ENCODE measurements at regions of chr9 and their contacts with region 1.

Region 1: GRCh38 chr9:4762108-4762885 is 21.3 kb upstream of the AK3 start:
- DNase-seq: peak; percentile 73
- ATAC-seq: peak; percentile 57
- H3K4me3 ChIP-seq: no peak overlapping the region
- H3K27ac ChIP-seq: no peak overlapping the region
- H3K4me1 ChIP-seq: no peaks in the 10 kb centered on the region
- H3K27me3 ChIP-seq: peaks cover 5% of the 10 kb centered on the region
- CTCF ChIP-seq: peak; percentile 86
- POLR2A ChIP-seq: 0 out of 2 replicates have a peak, but pooled peaks have one; percentile 31
- RAD21 ChIP-seq: peak; percentile 91

Region 2: DNA sequence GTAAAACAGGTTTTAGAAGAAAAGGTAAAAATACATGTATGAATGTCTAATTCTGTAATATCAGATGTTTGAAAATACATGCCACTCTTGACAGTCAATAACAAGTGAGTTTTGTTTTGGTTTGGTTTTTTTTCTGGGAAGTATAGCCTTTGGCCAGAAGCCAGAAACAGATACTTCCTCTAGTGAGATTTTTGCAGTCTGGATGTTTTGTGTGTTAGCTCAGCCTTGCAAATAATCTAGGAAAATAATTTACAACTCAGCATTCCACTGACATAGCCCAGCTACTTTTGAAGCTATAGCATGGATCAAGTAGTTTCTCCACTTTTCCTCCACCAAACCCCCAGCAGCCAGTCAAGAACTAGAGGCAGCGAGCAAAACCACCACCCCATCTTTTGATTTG is 215.3 kb before region 1 on chr9:
- CTCF ChIA-PET with region 1: no interaction called
- POLR2A ChIA-PET with region 1: no interaction called
- dilution Hi-C with region 1: no loop called
- in situ Hi-C with region 1: no loop called
- intact Hi-C with region 1: no loop called
- DNase-seq: peak; percentile 37
- ATAC-seq: peak; percentile 66
- H3K4me3 ChIP-seq: no peak overlapping the region
- H3K27ac ChIP-seq: no peak overlapping the region
- H3K4me1 ChIP-seq: peaks cover 2% of the 10 kb centered on the region
- H3K27me3 ChIP-seq: 0 out of 2 replicates have a peak, but pooled peaks cover 2% of the 10 kb centered on the region
- CTCF ChIP-seq: no peak
- POLR2A ChIP-seq: no peak
- RAD21 ChIP-seq: no peak

Region 3: DNA sequence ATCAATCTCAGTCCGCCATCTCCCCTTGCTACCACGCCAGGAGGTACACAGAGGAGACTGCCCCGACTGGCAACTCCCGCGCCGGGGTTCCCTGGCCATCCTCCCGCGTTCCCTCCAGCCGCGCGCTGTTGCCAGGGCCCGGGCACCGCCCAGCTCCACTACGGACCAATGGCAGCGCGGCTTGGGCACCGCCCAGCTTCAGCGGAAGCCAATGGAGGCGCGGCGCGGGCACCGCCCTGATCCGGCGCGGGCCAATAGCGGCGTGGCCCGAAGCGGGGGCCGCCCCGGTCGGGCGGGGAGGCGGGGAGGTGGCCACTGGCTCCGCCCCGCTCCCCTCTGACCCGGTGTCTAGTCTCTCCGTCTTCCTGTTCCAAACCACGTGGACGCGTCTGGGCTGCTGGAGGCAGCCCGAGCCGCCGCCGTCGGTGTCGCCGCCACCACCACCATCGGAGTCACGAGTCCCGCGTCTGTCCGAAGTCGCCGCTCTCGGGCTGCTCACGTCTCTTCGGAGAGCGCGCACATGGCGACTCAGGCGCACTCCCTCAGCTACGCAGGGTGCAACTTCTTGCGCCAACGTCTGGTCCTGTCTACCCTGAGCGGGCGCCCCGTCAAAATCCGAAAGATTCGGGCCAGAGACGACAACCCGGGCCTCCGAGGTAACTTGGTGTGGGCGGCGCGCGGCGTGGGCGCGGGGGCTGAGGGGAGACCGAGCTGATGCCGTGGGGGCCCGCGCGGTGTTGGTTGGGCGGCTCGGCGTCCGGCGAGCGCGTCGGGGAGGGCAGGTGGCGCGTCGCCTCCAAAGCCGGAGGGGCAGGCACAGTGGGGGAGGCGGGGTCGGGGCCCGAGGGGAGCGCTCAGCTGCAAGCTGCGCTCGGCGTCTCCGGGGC is 30.5 kb after region 1 on chr9 and contains the start of gene RCL1:
- CTCF ChIA-PET with region 1: no interaction called
- POLR2A ChIA-PET with region 1: no interaction called
- dilution Hi-C with region 1: no loop called
- in situ Hi-C with region 1: no loop called
- intact Hi-C with region 1: loop called (anchors 2 kb)
- DNase-seq: peak; percentile 92
- ATAC-seq: peak; percentile 98
- H3K4me3 ChIP-seq: peak within 1 kb of the TSS; percentile 86
- H3K27ac ChIP-seq: peak within 1 kb of the TSS; percentile 65
- H3K4me1 ChIP-seq: peaks cover 3% of the 10 kb centered on the region; the same call in 1 of the 2 replicates
- H3K27me3 ChIP-seq: no peaks in the 10 kb centered on the region
- CTCF ChIP-seq: no peak
- POLR2A ChIP-seq: peak; percentile 81
- RAD21 ChIP-seq: no peak; the same call in 1 of the 2 replicates
- total RNA-seq, gene RCL1: 13.8 and 14.7 TPM in 2 replicates

Region 4: DNA sequence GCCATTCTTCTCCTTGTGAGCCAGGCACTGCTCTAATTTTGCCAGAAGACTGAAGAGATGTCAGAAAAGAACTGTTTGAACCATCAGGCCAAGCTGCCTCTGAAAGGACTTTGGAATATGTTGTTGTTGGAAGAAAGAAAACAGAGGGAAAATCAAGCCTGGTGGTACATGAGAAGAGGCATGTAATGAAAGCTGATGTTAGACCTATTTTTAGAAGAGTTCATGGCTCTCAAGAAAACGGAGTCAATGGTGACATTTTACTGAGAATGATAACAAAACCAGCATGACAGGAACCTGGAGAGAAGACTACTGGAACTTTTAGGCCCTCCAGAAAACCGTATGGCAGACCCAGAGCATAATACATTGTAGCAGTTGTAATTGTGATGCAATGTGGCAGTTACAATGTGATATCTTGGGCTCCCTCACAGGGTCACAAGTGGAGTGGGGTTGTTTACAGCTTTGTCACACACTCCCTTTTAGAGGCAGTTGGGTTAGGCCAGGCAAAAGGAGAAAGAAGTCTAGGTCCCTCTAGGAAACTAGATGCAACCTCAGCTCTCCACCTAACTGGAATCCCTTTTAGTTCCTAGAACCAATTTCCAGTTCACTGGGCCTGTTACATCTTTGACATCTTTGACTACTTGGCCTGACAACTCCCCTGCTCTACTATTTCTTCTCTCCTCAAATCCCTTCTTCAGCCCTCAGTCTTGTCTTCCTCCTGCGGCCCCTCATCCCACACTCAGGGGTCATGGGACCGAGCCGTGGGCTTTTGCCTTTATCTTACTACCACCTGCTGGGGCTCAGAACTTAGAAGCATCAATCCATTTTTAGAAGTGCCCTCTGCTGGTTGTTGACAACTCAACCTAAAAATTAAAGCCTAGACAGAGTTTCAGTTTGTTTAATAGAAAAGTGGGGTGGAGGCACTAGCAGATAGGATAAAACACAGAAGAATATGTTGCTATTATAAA is 161.6 kb after region 1 on chr9:
- CTCF ChIA-PET with region 1: interaction called, 8 read pairs
- POLR2A ChIA-PET with region 1: no interaction called
- dilution Hi-C with region 1: no loop called
- in situ Hi-C with region 1: loop called (anchors 10 kb)
- intact Hi-C with region 1: loop called (anchors 1 kb)
- DNase-seq: peak; percentile 44
- ATAC-seq: peak; percentile 56
- H3K4me3 ChIP-seq: no peak overlapping the region
- H3K27ac ChIP-seq: no peak overlapping the region
- H3K4me1 ChIP-seq: no peaks in the 10 kb centered on the region
- H3K27me3 ChIP-seq: peaks cover 2% of the 10 kb centered on the region; the same call in 1 of the 2 replicates
- CTCF ChIP-seq: peak; percentile 61
- POLR2A ChIP-seq: no peak
- RAD21 ChIP-seq: peak; percentile 56

Region 5: DNA sequence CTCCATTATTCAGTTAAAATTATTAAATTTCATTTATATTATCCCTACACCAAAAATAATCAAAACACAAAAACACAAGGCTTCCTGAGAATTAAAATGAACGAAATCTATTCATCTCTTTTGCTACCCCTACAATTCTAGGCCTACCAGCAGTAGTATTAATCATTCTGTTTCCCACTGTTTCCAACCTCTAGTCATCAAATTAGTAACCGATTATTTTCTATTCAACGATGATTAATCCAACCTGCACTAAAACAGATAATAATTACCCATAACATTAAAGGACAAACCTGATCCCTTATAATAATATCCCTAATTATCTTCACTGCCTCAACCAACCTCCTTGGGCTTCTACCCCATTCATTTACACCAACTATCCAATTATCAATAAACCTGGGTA is 337.2 kb after region 1 on chr9:
- CTCF ChIA-PET with region 1: no interaction called
- POLR2A ChIA-PET with region 1: no interaction called
- dilution Hi-C with region 1: no loop called
- in situ Hi-C with region 1: no loop called
- intact Hi-C with region 1: no loop called
- DNase-seq: no peak
- ATAC-seq: no peak
- H3K4me3 ChIP-seq: no peak overlapping the region
- H3K27ac ChIP-seq: no peak overlapping the region
- H3K4me1 ChIP-seq: no peaks in the 10 kb centered on the region
- H3K27me3 ChIP-seq: no peaks in the 10 kb centered on the region
- CTCF ChIP-seq: no peak
- POLR2A ChIP-seq: no peak
- RAD21 ChIP-seq: no peak

Region 6: GRCh38 chr9:5186416-5187169 is 424.3 kb after region 1 on chr9:
- CTCF ChIA-PET with region 1: interaction called, 3 read pairs
- POLR2A ChIA-PET with region 1: no interaction called
- dilution Hi-C with region 1: no loop called
- in situ Hi-C with region 1: loop called (anchors 25 kb)
- intact Hi-C with region 1: loop called (anchors 10 kb)
- DNase-seq: peak; percentile 73
- ATAC-seq: peak; percentile 83
- H3K4me3 ChIP-seq: no peak overlapping the region
- H3K27ac ChIP-seq: no peak overlapping the region
- H3K4me1 ChIP-seq: no peaks in the 10 kb centered on the region
- H3K27me3 ChIP-seq: peaks cover 8% of the 10 kb centered on the region
- CTCF ChIP-seq: peak; percentile 82
- POLR2A ChIP-seq: no peak
- RAD21 ChIP-seq: peak; percentile 93

Region 7: GRCh38 chr9:5437254-5438216 is 675.2 kb after region 1 on chr9 and contains the start of gene PLGRKT:
- CTCF ChIA-PET with region 1: no interaction called
- POLR2A ChIA-PET with region 1: no interaction called
- dilution Hi-C with region 1: no loop called
- in situ Hi-C with region 1: loop called (anchors 25 kb)
- intact Hi-C with region 1: no loop called
- DNase-seq: peak; percentile 87
- ATAC-seq: peak; percentile 98
- H3K4me3 ChIP-seq: peak within 1 kb of the TSS; percentile 75
- H3K27ac ChIP-seq: peak within 1 kb of the TSS; percentile 70
- H3K4me1 ChIP-seq: peaks cover 5% of the 10 kb centered on the region
- H3K27me3 ChIP-seq: no peaks in the 10 kb centered on the region
- CTCF ChIP-seq: peak; percentile 29; the same call in 1 of the 2 replicates
- POLR2A ChIP-seq: peak; percentile 81
- RAD21 ChIP-seq: peak; percentile 27
- total RNA-seq, gene PLGRKT: 12.7 and 13.6 TPM in 2 replicates

Measured in IMR-90 (cell line).